CD4-positive, alpha-beta memory T cell (primary cell): ENCODE measurements at regions of chr17 and their contacts with region 1.

Region 1: GRCh38 chr17:16453493-16453851 is 38.1 kb downstream of the TRPV2 start:
- DNase-seq: no peak
- H3K4me3 ChIP-seq: no peak overlapping the region
- H3K4me3 Mint-ChIP-seq: peak overlapping the region in 1 of 8 donors; percentile 9
- H3K27ac ChIP-seq: no peak overlapping the region
- H3K27ac Mint-ChIP-seq: peak overlapping the region in 6 of 7 donors; percentile 25 to 75 (median 59)
- H3K4me1 ChIP-seq: no peaks in the 10 kb centered on the region
- H3K4me1 Mint-ChIP-seq: peaks cover 2 to 18% (median 10%) of the 10 kb centered on the region in 4 donors
- H3K27me3 ChIP-seq: no peaks in the 10 kb centered on the region
- H3K27me3 Mint-ChIP-seq: no peaks in the 10 kb centered on the region

Region 2: DNA sequence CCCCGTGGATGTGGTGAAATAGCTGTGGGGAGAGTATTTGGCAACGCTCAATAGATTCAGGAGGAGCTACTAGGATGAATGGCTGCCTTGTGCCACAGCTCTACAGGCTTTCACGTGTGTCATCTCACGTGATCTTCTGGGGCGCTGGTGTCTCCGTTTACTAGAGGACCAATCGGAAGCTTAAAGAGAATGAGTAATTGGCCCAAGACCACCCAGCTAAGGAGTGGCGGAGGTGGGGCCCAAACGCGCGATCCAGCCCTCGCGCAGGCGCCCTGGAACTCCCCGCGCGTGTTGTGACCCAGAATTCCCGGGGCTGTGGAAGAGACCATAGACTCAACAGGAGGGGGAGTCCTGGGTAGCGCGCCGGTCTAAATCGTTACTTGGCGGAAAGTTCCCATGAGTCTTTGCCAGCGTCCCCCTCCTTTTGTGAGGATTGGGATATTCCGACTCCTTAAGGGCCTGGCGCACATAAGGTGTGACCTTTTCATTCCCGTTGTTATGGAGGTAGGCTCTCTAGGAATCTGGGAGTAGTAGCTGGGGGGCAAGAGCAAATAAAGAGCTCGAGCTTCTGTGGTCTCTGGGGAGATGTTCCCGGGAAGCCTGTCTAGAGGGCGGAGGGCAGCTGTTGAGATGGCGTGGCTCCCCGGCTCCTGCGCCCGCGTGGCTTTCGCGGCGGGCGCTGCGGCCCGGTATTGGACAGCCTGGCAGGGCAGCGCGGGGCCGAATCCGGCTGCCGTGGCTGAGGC is 14.7 kb before region 1 on chr17:
- CTCF ChIA-PET with region 1: interaction called, 71 read pairs
- POLR2A ChIA-PET with region 1: interaction called, 34 read pairs
- intact Hi-C with region 1: loop called (anchors 2 kb)
- DNase-seq: peak; percentile 94 to 97 (median 96)
- H3K4me3 ChIP-seq: peak overlapping the region; percentile 78 to 95
- H3K4me3 Mint-ChIP-seq: peak overlapping the region; percentile 98 to 100 (median 99)
- H3K27ac ChIP-seq: peak overlapping the region; percentile 94
- H3K27ac Mint-ChIP-seq: peak overlapping the region; percentile 96 to 100 (median 99)
- H3K4me1 ChIP-seq: peaks cover 45% of the 10 kb centered on the region
- H3K4me1 Mint-ChIP-seq: peaks cover 32 to 57% (median 43%) of the 10 kb centered on the region in 4 donors
- H3K27me3 ChIP-seq: no peaks in the 10 kb centered on the region
- H3K27me3 Mint-ChIP-seq: no peaks in the 10 kb centered on the region

Region 3: DNA sequence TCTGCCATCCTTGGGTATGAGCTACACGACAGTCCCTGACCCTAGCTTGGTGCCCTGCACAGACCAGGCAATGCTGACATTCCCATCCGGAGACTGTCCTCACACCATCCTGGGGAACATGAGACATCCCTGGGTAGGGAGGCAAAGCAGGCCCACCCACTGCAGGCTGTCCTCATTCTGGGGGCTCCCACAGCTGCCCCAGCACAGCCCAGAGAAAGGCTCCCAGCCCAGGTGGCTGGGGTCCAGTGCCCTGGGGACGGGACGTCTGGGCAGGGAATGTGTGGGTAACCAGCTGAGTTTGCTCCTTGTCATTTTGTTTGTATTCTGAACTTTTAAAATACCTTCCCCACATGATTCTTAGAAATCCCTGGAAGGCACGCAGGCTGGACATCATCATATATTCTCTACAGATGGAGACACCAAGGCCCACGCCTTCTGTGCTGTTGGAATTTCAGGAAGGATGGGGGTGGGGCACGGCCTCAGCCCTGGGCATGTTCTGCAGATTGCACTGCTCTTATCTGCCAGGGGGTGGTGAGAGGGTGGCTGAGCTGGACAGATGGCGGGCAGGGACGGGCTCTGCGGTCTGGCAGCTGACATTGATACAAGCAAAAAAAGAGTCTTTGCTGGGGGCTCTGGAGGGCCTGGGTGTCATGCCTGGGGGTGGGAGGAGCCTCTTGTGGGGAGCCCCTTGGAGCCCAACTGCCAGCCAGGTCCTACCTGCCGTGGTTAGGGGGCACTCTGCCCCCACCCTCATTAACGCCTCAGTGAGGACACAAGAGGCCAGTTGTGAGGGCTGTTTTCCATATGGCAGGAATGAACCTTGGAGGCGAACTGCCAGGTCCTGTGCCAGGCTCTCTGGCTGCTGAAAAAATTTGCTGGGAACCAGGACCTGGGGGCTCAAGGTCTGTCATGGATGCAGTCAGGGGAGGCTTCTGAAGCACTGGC is 10.2 kb after region 1 on chr17:
- CTCF ChIA-PET with region 1: interaction called, 17 read pairs
- POLR2A ChIA-PET with region 1: interaction called, 3 read pairs
- intact Hi-C with region 1: no loop called
- DNase-seq: no peak
- H3K4me3 ChIP-seq: no peak overlapping the region
- H3K4me3 Mint-ChIP-seq: no peak overlapping the region
- H3K27ac ChIP-seq: no peak overlapping the region
- H3K27ac Mint-ChIP-seq: peak overlapping the region in 1 of 7 donors; percentile 42
- H3K4me1 ChIP-seq: no peaks in the 10 kb centered on the region
- H3K4me1 Mint-ChIP-seq: peaks cover 0 to 2% (median 0%) of the 10 kb centered on the region in 4 donors
- H3K27me3 ChIP-seq: no peaks in the 10 kb centered on the region
- H3K27me3 Mint-ChIP-seq: no peaks in the 10 kb centered on the region

Region 4: GRCh38 chr17:16473649-16474367 is 20.3 kb after region 1 on chr17:
- CTCF ChIA-PET with region 1: interaction called, 11 read pairs
- POLR2A ChIA-PET with region 1: no interaction called
- intact Hi-C with region 1: no loop called
- DNase-seq: no peak
- H3K4me3 ChIP-seq: no peak overlapping the region
- H3K4me3 Mint-ChIP-seq: no peak overlapping the region
- H3K27ac ChIP-seq: no peak overlapping the region
- H3K27ac Mint-ChIP-seq: no peak overlapping the region
- H3K4me1 ChIP-seq: no peaks in the 10 kb centered on the region
- H3K4me1 Mint-ChIP-seq: peaks cover 0 to 2% (median under 1%) of the 10 kb centered on the region in 4 donors
- H3K27me3 ChIP-seq: no peaks in the 10 kb centered on the region
- H3K27me3 Mint-ChIP-seq: no peaks in the 10 kb centered on the region

Region 5: DNA sequence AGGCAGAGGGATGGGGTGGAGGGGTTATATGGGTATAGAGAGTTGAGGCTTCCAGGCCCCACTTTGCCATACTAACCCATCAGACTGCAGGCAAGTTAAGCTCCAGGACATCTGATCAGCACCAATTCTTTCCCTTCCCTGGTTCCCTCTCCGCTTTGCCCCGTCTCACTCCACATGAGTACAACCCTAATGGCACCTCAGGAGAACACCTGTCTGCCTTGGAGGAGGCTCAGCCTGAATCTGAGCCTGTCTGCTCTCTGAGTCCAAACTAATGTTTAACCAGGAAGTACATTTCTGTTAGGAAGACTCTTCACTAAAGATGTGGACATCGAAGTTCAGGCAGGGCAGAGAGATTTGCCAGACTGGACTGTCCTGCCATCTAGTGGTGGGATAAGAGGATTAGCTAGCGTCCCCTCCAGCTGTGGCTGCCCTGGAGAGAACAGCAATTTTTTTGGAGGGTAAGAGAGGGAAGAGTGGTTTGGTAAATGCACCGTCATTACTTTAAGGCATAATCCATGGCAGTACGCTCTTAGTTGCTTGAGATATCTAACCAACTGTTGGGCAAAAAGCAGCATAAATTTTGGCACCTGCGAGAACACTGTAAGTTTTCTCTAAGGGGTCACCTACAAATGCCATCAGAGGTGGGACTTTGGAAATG is 67.7 kb after region 1 on chr17:
- CTCF ChIA-PET with region 1: interaction called, 144 read pairs
- POLR2A ChIA-PET with region 1: interaction called, 3 read pairs
- intact Hi-C with region 1: loop called (anchors 1 kb)
- DNase-seq: peak; percentile 64 to 71 (median 68)
- H3K4me3 ChIP-seq: no peak overlapping the region
- H3K4me3 Mint-ChIP-seq: no peak overlapping the region
- H3K27ac ChIP-seq: no peak overlapping the region
- H3K27ac Mint-ChIP-seq: peak overlapping the region in 2 of 7 donors; percentile 48 to 63
- H3K4me1 ChIP-seq: peaks cover 3% of the 10 kb centered on the region
- H3K4me1 Mint-ChIP-seq: peaks cover 0 to 5% (median 2%) of the 10 kb centered on the region in 4 donors
- H3K27me3 ChIP-seq: no peaks in the 10 kb centered on the region
- H3K27me3 Mint-ChIP-seq: peaks cover 20 to 21% of the 10 kb centered on the region in 2 donors

Region 6: GRCh38 chr17:16589097-16589969 is 135.9 kb after region 1 on chr17:
- CTCF ChIA-PET with region 1: interaction called, 5 read pairs
- POLR2A ChIA-PET with region 1: no interaction called
- intact Hi-C with region 1: loop called (anchors 1 kb)
- DNase-seq: peak; percentile 88 to 92 (median 90)
- H3K4me3 ChIP-seq: peak overlapping the region; percentile 19 to 68
- H3K4me3 Mint-ChIP-seq: peak overlapping the region; percentile 65 to 87 (median 80)
- H3K27ac ChIP-seq: no peak overlapping the region
- H3K27ac Mint-ChIP-seq: peak overlapping the region in 4 of 7 donors; percentile 30 to 75 (median 42)
- H3K4me1 ChIP-seq: peaks cover 12% of the 10 kb centered on the region
- H3K4me1 Mint-ChIP-seq: peaks cover 3 to 11% (median 8%) of the 10 kb centered on the region in 4 donors
- H3K27me3 ChIP-seq: no peaks in the 10 kb centered on the region
- H3K27me3 Mint-ChIP-seq: peaks cover 6 to 14% of the 10 kb centered on the region in 2 donors